OCI-LY7 (cell line): ENCODE measurements at regions of chr1 and their contacts with region 1.

Region 1: DNA sequence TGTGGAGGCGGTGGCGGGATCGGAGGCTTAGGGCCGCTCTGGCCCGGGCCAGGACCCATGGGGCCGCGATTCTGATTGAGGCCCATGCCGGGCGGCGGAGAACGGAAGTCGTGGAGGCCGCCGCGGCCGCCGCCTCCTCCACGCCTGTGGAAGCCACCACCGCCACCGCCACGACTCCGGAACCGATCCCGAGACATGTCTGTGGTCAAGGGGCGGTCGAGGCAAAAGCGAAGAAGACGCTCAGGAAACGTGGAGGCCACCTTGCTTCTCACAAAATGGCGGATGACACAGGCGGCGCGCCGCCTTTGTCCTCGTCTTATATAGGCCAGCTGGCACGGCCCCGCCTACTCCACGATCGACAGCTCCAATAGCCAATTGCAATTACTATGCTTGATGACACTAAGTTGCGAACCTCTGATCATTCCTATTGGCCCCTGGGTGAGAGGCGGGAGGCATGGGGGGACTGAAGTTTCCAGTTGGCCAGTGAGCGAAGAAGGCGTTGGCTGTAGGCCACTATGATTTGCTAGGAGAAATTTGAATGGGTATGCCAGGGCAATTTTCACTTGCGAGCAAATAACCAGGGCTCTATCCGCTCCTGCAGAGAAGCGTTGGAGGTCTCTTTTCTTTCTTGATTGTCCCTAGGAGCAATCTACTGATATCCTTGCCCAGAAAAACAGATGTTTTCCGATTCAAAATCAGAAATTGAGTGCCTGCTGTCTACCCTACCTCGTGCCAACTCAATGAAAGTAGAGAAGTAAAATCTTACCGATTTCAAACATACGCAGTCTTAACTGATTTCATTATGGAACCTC is at the start of gene SFPQ:
- DNase-seq: peak; percentile 98
- H3K4me3 ChIP-seq: peak within 1 kb of the TSS; percentile 98
- H3K27ac ChIP-seq: peak within 1 kb of the TSS; percentile 81
- H3K4me1 ChIP-seq: peaks cover 29% of the 10 kb centered on the region
- CTCF ChIP-seq: no peak
- total RNA-seq, gene SFPQ: 395 and 569 TPM in 2 replicates

Region 2: GRCh38 chr1:35243691-35244090 is 50.6 kb after region 1 on chr1:
- CTCF ChIA-PET with region 1: no interaction called
- POLR2A ChIA-PET with region 1: no interaction called
- intact Hi-C with region 1: no loop called
- DNase-seq: no peak
- H3K4me3 ChIP-seq: no peak overlapping the region
- H3K27ac ChIP-seq: no peak overlapping the region
- H3K4me1 ChIP-seq: no peaks in the 10 kb centered on the region
- CTCF ChIP-seq: no peak

Region 3: DNA sequence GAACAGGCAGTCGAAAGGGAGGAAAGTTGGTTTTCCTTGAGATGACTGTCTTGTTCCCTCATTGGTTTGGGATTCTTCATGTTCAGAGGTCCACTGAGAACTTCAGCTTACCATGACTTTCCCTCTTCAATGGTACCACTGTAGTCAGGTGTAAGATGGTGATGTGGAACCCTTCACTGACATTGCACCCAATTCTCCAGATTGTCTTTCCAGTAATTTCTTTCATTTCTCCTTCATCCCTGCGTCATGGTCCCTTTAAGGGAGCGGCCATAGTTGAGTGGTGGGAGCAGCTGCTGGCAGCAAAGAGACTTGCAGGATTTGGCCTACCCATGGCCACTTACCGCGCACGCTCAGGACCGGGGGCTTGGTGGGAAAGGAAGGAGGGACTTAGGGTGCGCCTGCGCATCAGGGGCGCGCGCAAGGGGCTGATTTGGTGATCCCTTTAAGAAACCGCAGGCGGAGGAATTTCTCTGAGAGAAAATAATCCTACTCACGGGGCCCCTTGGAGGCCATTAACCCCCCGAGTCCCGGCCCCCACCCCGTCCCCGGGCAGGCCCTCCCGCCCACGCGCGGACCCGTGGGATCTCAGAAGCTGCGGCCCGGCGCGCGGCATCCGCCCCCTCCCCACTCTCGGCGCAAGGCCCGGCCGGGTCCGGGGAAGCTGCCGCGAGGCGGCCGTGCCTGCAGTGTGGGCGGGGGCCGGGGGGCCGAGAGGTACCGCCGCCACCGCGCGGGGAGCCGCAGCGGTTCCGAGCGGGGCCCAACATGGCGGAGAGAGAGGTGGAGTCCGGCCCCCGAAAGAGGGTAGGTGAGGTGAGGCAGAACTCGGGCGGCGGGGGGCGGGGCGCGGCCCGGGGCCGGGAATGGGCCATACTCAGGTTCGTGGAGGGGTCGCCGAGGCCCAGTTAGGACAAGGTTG is 75.5 kb after region 1 on chr1 and contains the start of gene ZMYM4:
- CTCF ChIA-PET with region 1: no interaction called
- POLR2A ChIA-PET with region 1: no interaction called
- intact Hi-C with region 1: loop called (anchors 2 kb)
- DNase-seq: peak; percentile 96
- H3K4me3 ChIP-seq: peak within 1 kb of the TSS; percentile 98
- H3K27ac ChIP-seq: peak within 1 kb of the TSS; percentile 65
- H3K4me1 ChIP-seq: peaks cover 21% of the 10 kb centered on the region
- CTCF ChIP-seq: no peak
- total RNA-seq, gene ZMYM4: 21.1 and 24.3 TPM in 2 replicates

Region 4: GRCh38 chr1:35825255-35825654 is 632.2 kb after region 1 on chr1:
- CTCF ChIA-PET with region 1: no interaction called
- POLR2A ChIA-PET with region 1: no interaction called
- intact Hi-C with region 1: no loop called
- DNase-seq: no peak
- H3K4me3 ChIP-seq: no peak overlapping the region
- H3K27ac ChIP-seq: no peak overlapping the region
- H3K4me1 ChIP-seq: no peaks in the 10 kb centered on the region
- CTCF ChIP-seq: no peak